ENCODE measurements at regions of chr3 and their contacts with region 1.

Region 1: GRCh38 chr3:125585595-125586223 is 9.6 kb downstream of the OSBPL11 start:
- DNase-seq: peak; percentile 57
- H3K4me3 Mint-ChIP-seq: no peak overlapping the region
- H3K27ac Mint-ChIP-seq: no peak overlapping the region
- H3K4me1 Mint-ChIP-seq: peaks cover 23% of the 10 kb centered on the region
- H3K27me3 Mint-ChIP-seq: no peaks in the 10 kb centered on the region

Region 2: GRCh38 chr3:124928333-124929202 is 657.1 kb before region 1 on chr3:
- CTCF ChIA-PET with region 1: interaction called, 5 read pairs
- POLR2A ChIA-PET with region 1: no interaction called
- intact Hi-C with region 1: loop called (anchors 5 kb)
- DNase-seq: peak; percentile 70
- H3K4me3 Mint-ChIP-seq: no peak overlapping the region
- H3K27ac Mint-ChIP-seq: no peak overlapping the region
- H3K4me1 Mint-ChIP-seq: no peaks in the 10 kb centered on the region
- H3K27me3 Mint-ChIP-seq: peaks cover 3% of the 10 kb centered on the region

Region 3: GRCh38 chr3:124995460-124995994 is 590.2 kb before region 1 on chr3:
- CTCF ChIA-PET with region 1: interaction called, 11 read pairs
- POLR2A ChIA-PET with region 1: no interaction called
- intact Hi-C with region 1: loop called (anchors 5 kb)
- DNase-seq: peak; percentile 61
- H3K4me3 Mint-ChIP-seq: no peak overlapping the region
- H3K27ac Mint-ChIP-seq: no peak overlapping the region
- H3K4me1 Mint-ChIP-seq: no peaks in the 10 kb centered on the region
- H3K27me3 Mint-ChIP-seq: no peaks in the 10 kb centered on the region

Region 4: DNA sequence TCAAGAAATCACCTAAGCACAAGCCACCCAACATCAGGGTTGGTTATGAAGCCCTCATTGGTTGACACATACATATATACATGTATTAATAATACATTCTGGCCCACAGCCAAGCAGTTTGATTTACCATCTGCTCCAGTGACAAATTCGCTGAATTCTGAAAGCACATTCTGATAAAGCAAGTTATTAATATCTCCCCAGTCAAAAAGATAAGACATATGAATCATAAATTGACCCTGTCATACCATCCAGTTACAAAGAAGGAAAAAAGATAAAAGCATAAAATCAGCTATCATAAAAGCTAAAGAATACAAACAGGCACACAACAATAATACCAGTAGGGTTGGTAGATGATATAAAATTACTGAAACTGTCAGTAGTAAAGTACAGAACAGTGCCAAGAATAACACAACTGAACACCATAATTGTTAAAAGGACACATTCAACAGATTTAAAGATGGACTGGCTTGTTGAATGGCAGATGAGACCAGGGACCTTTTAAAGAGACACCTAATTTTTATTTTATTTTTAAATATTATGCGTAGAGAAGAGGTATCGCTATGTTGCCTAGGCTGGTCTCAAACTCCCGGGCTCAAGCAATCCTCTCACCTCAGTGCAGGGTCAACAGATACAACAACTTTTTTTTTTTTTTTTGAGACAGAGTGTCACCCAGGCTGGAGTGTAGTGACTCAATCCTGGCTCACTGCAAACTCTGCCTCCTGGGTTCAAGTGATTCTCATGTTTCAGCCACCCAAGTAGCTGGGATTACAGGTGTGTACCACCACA is 73.4 kb before region 1 on chr3:
- CTCF ChIA-PET with region 1: interaction called, 6 read pairs
- POLR2A ChIA-PET with region 1: no interaction called
- intact Hi-C with region 1: loop called (anchors 5 kb)
- DNase-seq: peak; percentile 67
- H3K4me3 Mint-ChIP-seq: no peak overlapping the region
- H3K27ac Mint-ChIP-seq: peak overlapping the region; percentile 83
- H3K4me1 Mint-ChIP-seq: peaks cover 48% of the 10 kb centered on the region
- H3K27me3 Mint-ChIP-seq: no peaks in the 10 kb centered on the region

Region 5: DNA sequence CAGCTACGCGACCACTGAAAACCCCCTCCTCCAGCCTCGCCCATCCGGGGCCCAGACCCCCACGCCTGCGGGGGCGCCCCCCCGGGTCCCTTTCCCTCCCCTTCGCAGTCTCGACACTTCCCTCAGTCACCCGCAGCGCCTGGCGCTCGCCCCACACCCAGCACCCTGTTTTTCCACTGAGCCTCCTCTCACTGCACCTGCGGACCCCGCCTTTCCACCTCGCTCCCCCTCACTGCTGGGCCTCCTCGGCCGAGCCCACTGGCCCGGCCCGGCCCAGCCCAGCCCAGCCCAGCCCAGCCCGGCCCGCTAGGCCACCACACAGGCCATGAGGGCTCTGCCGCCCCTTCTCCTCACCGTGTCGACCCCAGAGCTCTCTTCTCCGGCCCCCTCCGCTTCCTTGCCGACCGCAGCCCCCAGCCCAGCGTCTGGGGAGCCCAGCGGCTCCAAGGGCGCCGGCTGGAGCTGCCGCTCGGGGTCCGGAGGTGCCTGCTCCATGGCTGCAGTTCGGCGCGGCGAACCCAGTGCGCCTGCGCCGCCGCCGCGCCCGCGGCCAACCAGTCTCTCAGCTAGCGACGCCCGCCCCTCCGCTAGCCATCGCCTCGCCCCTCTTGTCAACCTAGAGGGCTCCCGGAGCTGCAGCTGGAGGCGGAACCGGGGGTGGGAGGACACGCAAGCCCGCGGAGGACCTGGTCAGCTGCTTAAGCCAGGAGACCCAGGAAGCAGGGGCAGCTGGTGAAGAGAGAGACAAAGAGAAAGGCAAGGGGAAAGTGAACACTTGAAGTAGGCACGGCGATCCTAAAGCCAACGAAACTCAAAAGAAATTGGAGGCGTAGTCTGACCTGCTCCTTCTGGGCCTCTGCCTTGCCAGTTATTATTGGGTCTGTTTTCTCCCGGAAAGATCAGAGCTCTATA is 65.8 kb before region 1 on chr3 and contains the start of gene SNX4:
- CTCF ChIA-PET with region 1: interaction called, 16 read pairs
- POLR2A ChIA-PET with region 1: no interaction called
- intact Hi-C with region 1: no loop called
- DNase-seq: peak; percentile 93
- H3K4me3 Mint-ChIP-seq: peak within 1 kb of the TSS; percentile 85
- H3K27ac Mint-ChIP-seq: peak within 1 kb of the TSS; percentile 79
- H3K4me1 Mint-ChIP-seq: peaks cover 32% of the 10 kb centered on the region
- H3K27me3 Mint-ChIP-seq: no peaks in the 10 kb centered on the region
- total RNA-seq, gene SNX4: 32.9 to 36.8 TPM

Region 6: GRCh38 chr3:126293370-126294082 is 707.8 kb after region 1 on chr3:
- CTCF ChIA-PET with region 1: no interaction called
- POLR2A ChIA-PET with region 1: no interaction called
- intact Hi-C with region 1: no loop called
- DNase-seq: no peak
- H3K4me3 Mint-ChIP-seq: no peak overlapping the region
- H3K27ac Mint-ChIP-seq: no peak overlapping the region
- H3K4me1 Mint-ChIP-seq: no peaks in the 10 kb centered on the region
- H3K27me3 Mint-ChIP-seq: peaks cover 23% of the 10 kb centered on the region